ENCODE measurements at regions of chr3 and their contacts with region 1.

Region 1: DNA sequence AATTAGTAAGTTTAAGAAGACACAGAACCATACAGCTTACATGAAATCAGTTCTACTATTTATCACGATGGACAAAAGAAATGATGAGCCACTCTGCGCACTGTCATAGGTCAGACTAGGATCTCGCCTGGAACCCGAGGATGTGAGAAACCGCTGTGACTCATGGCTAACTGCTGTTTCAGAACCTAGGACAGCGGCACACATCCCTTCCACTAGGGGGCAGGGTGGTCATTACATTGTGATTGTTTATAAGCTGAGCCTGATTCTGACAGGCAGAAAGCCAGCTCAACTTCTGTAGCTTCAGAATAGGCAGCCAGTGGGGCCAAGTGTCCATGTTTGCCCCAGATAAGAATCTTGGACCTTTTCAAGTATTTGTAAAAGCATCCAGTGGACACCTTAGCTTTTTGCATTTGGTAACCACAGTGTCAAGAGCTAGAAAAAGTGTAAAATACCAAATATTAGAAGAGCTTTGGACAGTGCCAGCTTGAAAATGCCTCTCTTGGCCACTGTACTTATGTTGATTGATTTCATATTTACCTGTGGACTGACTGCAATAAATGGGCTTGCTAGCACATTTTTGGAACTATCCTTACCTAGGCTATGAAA is 115.8 kb downstream of the KBTBD8 start:
- DNase-seq: peak; percentile 94
- H3K4me3 Mint-ChIP-seq: no peak overlapping the region
- H3K27ac Mint-ChIP-seq: no peak overlapping the region
- H3K4me1 Mint-ChIP-seq: peaks cover 4% of the 10 kb centered on the region
- H3K27me3 Mint-ChIP-seq: peaks cover 24% of the 10 kb centered on the region

Region 2: DNA sequence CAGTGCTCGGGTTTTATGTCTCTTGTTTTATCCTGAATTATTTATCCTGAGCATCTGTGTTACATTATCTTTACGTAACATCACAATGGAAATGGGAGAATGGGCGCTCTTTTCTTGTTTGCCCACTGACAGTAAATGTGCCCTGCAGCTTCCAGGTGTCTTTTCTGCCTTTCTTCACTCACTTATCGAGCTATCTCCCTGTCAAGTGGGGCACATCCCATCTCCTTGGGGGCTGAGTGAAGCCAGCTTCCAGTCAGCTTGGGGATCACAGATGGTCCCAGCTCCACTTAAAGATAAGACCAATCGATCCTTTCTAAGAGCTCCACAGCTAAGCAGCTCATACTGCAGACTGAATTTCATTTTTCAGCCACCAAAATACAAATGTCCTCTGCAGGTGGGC is 10.0 kb after region 1 on chr3:
- CTCF ChIA-PET with region 1: interaction called, 18 read pairs
- intact Hi-C with region 1: no loop called
- DNase-seq: no peak
- H3K4me3 Mint-ChIP-seq: no peak overlapping the region
- H3K27ac Mint-ChIP-seq: no peak overlapping the region
- H3K4me1 Mint-ChIP-seq: no peaks in the 10 kb centered on the region
- H3K27me3 Mint-ChIP-seq: peaks cover 14% of the 10 kb centered on the region

Region 3: GRCh38 chr3:67176396-67176795 is 62.5 kb after region 1 on chr3:
- CTCF ChIA-PET with region 1: no interaction called
- intact Hi-C with region 1: no loop called
- DNase-seq: no peak
- H3K4me3 Mint-ChIP-seq: no peak overlapping the region
- H3K27ac Mint-ChIP-seq: no peak overlapping the region
- H3K4me1 Mint-ChIP-seq: no peaks in the 10 kb centered on the region
- H3K27me3 Mint-ChIP-seq: no peaks in the 10 kb centered on the region

Region 4: GRCh38 chr3:67384760-67385397 is 271.0 kb after region 1 on chr3:
- CTCF ChIA-PET with region 1: interaction called, 11 read pairs
- intact Hi-C with region 1: no loop called
- DNase-seq: peak; percentile 67
- H3K4me3 Mint-ChIP-seq: no peak overlapping the region
- H3K27ac Mint-ChIP-seq: no peak overlapping the region
- H3K4me1 Mint-ChIP-seq: peaks cover 31% of the 10 kb centered on the region
- H3K27me3 Mint-ChIP-seq: no peaks in the 10 kb centered on the region

Region 5: DNA sequence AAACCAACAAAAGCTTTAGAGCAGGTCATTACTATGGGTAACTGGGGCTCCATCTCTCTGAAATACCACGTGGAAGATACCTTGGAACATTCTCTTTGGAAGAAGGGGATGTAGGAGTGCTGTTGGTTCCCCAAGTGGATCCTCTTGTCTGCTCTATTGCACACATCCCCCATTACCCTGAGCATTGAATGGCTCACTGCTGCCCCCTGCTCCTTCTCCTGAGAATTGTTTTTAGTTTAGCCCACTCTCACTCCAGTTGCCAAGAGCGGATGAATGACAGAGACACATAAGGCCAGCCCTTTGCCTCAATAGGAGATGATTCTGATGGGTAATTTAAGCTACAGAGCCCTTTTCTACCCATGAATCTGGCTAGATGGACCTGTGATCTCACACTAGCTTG is 676.1 kb after region 1 on chr3:
- CTCF ChIA-PET with region 1: interaction called, 16 read pairs
- intact Hi-C with region 1: loop called (anchors 1 kb)
- DNase-seq: peak; percentile 81
- H3K4me3 Mint-ChIP-seq: no peak overlapping the region
- H3K27ac Mint-ChIP-seq: no peak overlapping the region
- H3K4me1 Mint-ChIP-seq: peaks cover 14% of the 10 kb centered on the region
- H3K27me3 Mint-ChIP-seq: no peaks in the 10 kb centered on the region

Region 6: DNA sequence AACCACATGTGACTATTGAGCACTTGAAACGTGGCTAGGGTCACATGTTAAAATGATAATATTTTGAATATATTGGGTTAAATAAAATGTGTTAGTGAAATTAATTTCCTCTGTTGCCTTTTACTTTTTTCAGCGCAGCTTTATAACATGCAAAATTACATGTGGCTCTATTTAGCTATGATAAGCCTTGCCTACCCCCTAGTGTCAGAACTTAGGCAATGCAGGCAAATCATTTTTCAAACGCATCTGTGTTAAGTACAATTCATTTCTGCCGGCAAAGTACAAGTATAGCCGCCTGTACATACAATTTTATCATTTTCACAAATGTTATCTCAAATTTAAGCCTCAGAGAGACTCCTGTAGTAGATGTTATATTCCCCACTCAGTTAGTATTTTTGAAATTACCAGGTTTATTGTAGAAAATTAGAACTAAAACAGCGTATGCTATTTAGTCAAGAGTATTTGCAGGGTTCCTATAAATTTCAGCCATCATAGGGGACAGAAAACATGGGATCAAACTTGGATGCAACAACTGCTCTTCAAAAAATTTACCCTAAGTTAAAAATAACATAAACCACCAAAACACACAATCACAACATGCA is 1762.3 kb after region 1 on chr3:
- CTCF ChIA-PET with region 1: interaction called, 4 read pairs
- intact Hi-C with region 1: loop called (anchors 1 kb)
- DNase-seq: peak; percentile 51
- H3K4me3 Mint-ChIP-seq: no peak overlapping the region
- H3K27ac Mint-ChIP-seq: no peak overlapping the region
- H3K4me1 Mint-ChIP-seq: no peaks in the 10 kb centered on the region
- H3K27me3 Mint-ChIP-seq: peaks cover 5% of the 10 kb centered on the region

Measured in activated naive CD4-positive, alpha-beta T cell treated with anti-CD3 and anti-CD28 coated beads for 36 hours (primary cell).